MCF 10A (cell line): ENCODE measurements at regions of chr11 and their contacts with region 1.

Region 1: GRCh38 chr11:133927690-133928627 is 28.8 kb downstream of the IGSF9B start:
- DNase-seq: peak; percentile 78
- H3K4me3 Mint-ChIP-seq: peak overlapping the region; percentile 69
- H3K27ac Mint-ChIP-seq: peak overlapping the region; percentile 71
- H3K4me1 Mint-ChIP-seq: peaks cover 18% of the 10 kb centered on the region
- H3K27me3 Mint-ChIP-seq: no peaks in the 10 kb centered on the region
- CTCF ChIP-seq: peak; percentile 98

Region 2: GRCh38 chr11:133753150-133753549 is 174.8 kb before region 1 on chr11:
- CTCF ChIA-PET with region 1: no interaction called
- POLR2A ChIA-PET with region 1: no interaction called
- intact Hi-C with region 1: no loop called
- DNase-seq: no peak
- H3K4me3 Mint-ChIP-seq: no peak overlapping the region
- H3K27ac Mint-ChIP-seq: no peak overlapping the region
- H3K4me1 Mint-ChIP-seq: no peaks in the 10 kb centered on the region
- H3K27me3 Mint-ChIP-seq: peaks cover 24% of the 10 kb centered on the region
- CTCF ChIP-seq: no peak

Region 3: DNA sequence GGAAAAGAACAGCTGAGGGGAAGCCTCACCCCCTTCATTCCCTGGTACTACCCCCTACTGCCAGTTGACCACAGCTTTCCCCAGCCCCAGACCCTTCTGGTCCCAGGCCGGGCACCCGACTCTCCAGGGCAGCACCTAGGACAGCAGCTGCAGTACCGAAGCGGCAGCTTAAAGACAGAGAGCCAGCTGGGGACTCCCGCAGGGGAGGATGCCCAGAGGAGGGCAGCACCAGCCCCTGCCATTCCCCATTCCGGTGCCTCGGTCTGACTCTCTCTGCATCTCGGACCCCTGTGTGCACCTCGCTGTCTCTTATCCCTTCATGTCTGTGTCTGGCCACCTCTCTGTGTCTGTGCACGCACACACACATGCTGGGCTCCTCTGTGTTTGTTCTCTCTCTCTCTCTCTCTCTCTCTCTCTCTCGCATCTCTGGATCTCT is 19.4 kb after region 1 on chr11:
- CTCF ChIA-PET with region 1: interaction called, 57 read pairs
- POLR2A ChIA-PET with region 1: interaction called, 6 read pairs
- intact Hi-C with region 1: loop called (anchors 2 kb)
- DNase-seq: peak; percentile 62
- H3K4me3 Mint-ChIP-seq: no peak overlapping the region
- H3K27ac Mint-ChIP-seq: no peak overlapping the region
- H3K4me1 Mint-ChIP-seq: peaks cover 53% of the 10 kb centered on the region
- H3K27me3 Mint-ChIP-seq: no peaks in the 10 kb centered on the region
- CTCF ChIP-seq: peak; percentile 28

Region 4: GRCh38 chr11:133992121-133992520 is 64.2 kb after region 1 on chr11:
- CTCF ChIA-PET with region 1: no interaction called
- POLR2A ChIA-PET with region 1: no interaction called
- intact Hi-C with region 1: no loop called
- DNase-seq: peak; percentile 14
- H3K4me3 Mint-ChIP-seq: no peak overlapping the region
- H3K27ac Mint-ChIP-seq: no peak overlapping the region
- H3K4me1 Mint-ChIP-seq: peaks cover 16% of the 10 kb centered on the region
- H3K27me3 Mint-ChIP-seq: no peaks in the 10 kb centered on the region
- CTCF ChIP-seq: no peak

Region 5: GRCh38 chr11:134024420-134025081 is 96.6 kb after region 1 on chr11:
- CTCF ChIA-PET with region 1: interaction called, 17 read pairs
- POLR2A ChIA-PET with region 1: interaction called, 11 read pairs
- intact Hi-C with region 1: no loop called
- DNase-seq: peak; percentile 89
- H3K4me3 Mint-ChIP-seq: peak overlapping the region; percentile 50
- H3K27ac Mint-ChIP-seq: peak overlapping the region; percentile 81
- H3K4me1 Mint-ChIP-seq: peaks cover 33% of the 10 kb centered on the region
- H3K27me3 Mint-ChIP-seq: no peaks in the 10 kb centered on the region
- CTCF ChIP-seq: no peak

Region 6: GRCh38 chr11:134040386-134041302 is 112.7 kb after region 1 on chr11:
- CTCF ChIA-PET with region 1: interaction called, 109 read pairs
- POLR2A ChIA-PET with region 1: interaction called, 24 read pairs
- intact Hi-C with region 1: loop called (anchors 1 kb)
- DNase-seq: peak; percentile 81
- H3K4me3 Mint-ChIP-seq: peak overlapping the region; percentile 13
- H3K27ac Mint-ChIP-seq: peak overlapping the region; percentile 84
- H3K4me1 Mint-ChIP-seq: peaks cover 36% of the 10 kb centered on the region
- H3K27me3 Mint-ChIP-seq: no peaks in the 10 kb centered on the region
- CTCF ChIP-seq: no peak

Region 7: DNA sequence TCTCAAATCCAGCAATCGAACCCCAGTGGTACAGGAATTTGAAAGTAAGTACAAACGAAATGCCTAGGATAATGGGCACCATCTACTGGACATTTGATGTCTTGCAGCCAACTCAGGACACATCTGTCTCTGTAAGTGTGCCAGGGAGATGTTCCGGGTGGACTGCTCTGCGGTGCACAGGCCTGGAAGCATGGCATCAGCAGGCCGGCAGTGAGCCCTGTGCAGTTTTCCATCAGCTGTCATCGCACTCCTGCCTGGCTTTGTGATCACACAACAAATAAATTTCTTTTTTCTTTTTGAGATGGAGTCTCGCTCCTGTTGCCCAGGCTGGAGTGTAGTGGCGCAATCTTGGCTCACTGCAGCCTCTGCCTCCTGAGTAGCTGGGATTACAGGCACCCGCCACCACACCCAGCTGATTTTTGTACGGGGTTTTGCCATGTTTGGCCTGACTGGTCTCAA is 211.9 kb after region 1 on chr11:
- CTCF ChIA-PET with region 1: interaction called, 47 read pairs
- POLR2A ChIA-PET with region 1: interaction called, 6 read pairs
- intact Hi-C with region 1: loop called (anchors 1 kb)
- DNase-seq: peak; percentile 75
- H3K4me3 Mint-ChIP-seq: no peak overlapping the region
- H3K27ac Mint-ChIP-seq: no peak overlapping the region
- H3K4me1 Mint-ChIP-seq: peaks cover 3% of the 10 kb centered on the region
- H3K27me3 Mint-ChIP-seq: peaks cover 20% of the 10 kb centered on the region
- CTCF ChIP-seq: peak; percentile 85